ENCODE measurements at regions of chr10 and their contacts with region 1.

Region 1: DNA sequence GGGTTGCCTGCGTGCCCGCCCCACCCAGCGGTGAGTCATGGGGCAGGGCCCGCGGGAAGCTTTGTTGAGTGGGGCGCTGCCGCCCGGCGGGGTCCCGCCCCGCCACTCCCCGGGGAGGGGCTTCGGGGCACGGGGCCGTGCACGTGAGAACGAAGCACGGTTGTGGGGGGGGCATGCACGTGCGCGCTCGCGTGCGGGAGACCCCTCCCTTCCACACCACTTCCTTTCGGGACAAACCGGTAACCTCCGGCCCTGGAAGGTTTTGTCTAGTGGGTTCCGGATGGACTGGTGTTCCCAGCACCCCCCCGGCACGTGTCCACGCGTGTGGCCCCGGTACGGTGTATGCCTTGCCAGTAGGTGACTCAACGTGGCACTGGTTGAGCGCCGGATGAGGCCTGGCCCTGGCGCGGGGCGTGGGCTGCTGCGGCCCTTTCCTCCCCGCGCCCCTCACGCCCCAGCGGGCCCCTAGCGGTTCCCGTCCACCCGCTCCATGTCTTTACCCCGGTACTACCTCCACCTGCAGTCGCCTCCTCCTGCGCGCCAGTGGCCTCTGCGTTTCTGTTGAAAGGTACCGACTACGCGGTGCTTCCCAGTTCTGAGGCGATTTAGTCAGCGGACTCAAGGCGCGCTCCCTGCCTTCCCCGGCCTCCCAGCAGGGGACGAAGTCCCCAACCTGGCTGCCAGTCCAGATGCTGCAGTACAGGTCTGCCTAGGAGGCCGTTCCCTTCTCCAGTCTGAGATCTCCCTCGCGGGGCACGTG is 3.1 kb downstream of the ADIRF start:
- DNase-seq: peak; percentile 92
- H3K4me3 ChIP-seq: peak overlapping the region; percentile 39
- H3K27ac ChIP-seq: peak overlapping the region; percentile 69
- H3K4me1 ChIP-seq: peaks cover 9% of the 10 kb centered on the region
- H3K27me3 ChIP-seq: no peaks in the 10 kb centered on the region
- CTCF ChIP-seq: no peak

Region 2: DNA sequence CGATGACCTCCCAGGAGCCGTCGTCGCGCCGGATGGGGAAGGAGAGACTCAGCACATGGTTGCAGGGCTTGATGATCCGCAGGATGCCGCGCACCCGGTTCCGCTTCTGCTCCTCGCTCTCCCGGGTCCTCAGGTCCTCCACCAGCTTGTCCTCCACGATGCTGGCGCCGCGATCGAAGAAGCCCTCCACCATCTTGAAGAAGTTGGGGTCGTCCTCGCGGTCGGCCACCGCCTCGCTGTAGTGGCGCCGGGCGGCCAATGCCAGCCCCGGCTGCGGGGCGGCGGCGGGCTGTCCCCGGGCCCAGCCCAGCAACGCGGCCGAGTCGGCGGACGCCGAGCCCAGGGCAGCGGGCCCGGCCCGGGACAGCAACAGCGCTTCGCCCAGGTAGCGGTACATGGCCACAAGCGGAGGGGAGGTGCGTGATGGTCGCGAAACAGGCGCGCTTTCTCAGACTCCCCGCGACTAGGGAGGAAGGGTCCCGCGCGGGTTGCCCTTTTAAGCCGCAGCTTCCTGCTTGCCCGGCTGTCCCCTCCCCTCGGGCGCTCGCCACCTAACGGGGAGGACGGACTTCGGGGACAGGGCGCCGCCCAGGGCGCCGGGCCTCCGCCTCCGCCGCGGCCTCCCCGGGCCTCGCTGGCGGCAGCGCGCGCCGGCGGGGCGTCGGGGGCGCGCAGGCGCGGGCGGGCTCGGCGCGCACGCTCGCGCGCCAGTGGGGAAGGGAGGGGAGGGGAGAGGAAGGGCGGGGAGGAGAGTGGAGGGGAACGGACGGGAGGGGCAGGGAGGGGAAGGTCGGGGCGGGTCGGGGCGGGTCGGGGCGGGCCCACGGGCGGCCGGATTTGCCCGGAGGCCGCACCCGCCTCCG is 123.2 kb after region 1 on chr10 and contains the starts of genes GLUD1 and SHLD2:
- intact Hi-C with region 1: loop called (anchors 10 kb)
- DNase-seq: peak; percentile 95
- H3K4me3 ChIP-seq: peak within 1 kb of the TSS; percentile 60
- H3K27ac ChIP-seq: peak within 1 kb of the TSS; percentile 92
- H3K4me1 ChIP-seq: no peaks in the 10 kb centered on the region
- H3K27me3 ChIP-seq: no peaks in the 10 kb centered on the region
- CTCF ChIP-seq: no peak
- total RNA-seq, gene GLUD1: 94.1 to 207 TPM
- total RNA-seq, gene SHLD2: 27.8 to 28.3 TPM